Colonic mucosa (tissue), 4 donors: ENCODE measurements at regions of chr6 and their contacts with region 1.

Region 1: DNA sequence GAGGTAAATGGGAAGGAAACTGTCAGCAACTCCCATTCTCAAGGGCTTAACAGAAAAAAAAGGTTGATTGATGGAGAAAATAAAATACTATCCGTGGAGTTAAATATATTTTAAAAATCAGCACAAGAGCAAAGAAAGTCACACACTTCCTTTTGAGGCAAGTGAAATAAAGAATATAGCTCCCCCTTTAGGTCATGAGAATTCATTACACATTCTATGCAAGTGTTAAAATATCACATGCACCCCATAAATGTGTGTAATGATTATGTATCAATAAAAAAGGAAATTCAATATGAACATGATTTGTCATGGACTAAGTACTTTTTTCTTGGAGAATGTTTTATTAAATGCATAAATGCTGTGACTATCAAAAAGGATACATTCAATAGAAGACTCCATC is 349.2 kb downstream of the TPBG start:
- DNase-seq: no peak
- H3K4me3 ChIP-seq: no peak overlapping the region
- H3K27ac ChIP-seq: no peak overlapping the region
- H3K4me1 ChIP-seq: no peaks in the 10 kb centered on the region
- H3K27me3 ChIP-seq: no peaks in the 10 kb centered on the region
- CTCF ChIP-seq: no peak

Region 2: GRCh38 chr6:82270881-82271645 is 441.8 kb before region 1 on chr6:
- intact Hi-C with region 1: loop called (anchors 5 kb)
- DNase-seq: no peak
- H3K4me3 ChIP-seq: no peak overlapping the region
- H3K27ac ChIP-seq: no peak overlapping the region
- H3K4me1 ChIP-seq: no peaks in the 10 kb centered on the region
- H3K27me3 ChIP-seq: no peaks in the 10 kb centered on the region
- CTCF ChIP-seq: peak; percentile 65

Region 3: DNA sequence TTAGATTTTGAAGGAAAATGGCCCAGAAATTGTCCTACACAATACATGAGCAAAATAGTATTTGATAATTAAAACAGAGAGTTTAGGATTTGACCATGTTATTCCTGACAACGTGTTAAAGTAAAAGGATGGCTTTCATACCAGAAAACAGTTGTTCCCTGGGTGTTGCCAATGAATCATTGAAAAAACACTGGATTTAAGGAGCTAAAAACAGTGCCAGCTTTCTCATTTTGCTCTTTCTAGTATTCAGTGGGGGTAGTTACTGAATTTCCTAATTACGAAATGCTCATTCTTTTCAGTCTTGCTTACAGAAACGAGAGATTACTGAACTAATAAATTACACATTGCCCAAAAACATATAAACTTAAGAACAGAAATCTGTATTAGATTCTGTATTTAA is 1022.6 kb after region 1 on chr6:
- intact Hi-C with region 1: no loop called
- DNase-seq: no peak
- H3K4me3 ChIP-seq: no peak overlapping the region
- H3K27ac ChIP-seq: no peak overlapping the region
- H3K4me1 ChIP-seq: no peaks in the 10 kb centered on the region
- H3K27me3 ChIP-seq: no peaks in the 10 kb centered on the region
- CTCF ChIP-seq: no peak